Gastrocnemius medialis (tissue), 4 donors: ENCODE measurements at regions of chr11 and their contacts with region 1.

Region 1: GRCh38 chr11:113603277-113604059 is 102.6 kb downstream of the TMPRSS5 start:
- DNase-seq: peak; percentile 41 to 77
- ATAC-seq: peak; percentile 97
- H3K4me3 ChIP-seq: peak overlapping the region in 1 of 4 donors; percentile 12
- H3K27ac ChIP-seq: peak overlapping the region in 3 of 4 donors; percentile 60 to 64 (median 62)
- H3K4me1 ChIP-seq: peaks cover 14 to 20% of the 10 kb centered on the region in 2 donors
- H3K27me3 ChIP-seq: no peaks in the 10 kb centered on the region
- CTCF ChIP-seq: no peak
- POLR2A ChIP-seq: no peak

Region 2: DNA sequence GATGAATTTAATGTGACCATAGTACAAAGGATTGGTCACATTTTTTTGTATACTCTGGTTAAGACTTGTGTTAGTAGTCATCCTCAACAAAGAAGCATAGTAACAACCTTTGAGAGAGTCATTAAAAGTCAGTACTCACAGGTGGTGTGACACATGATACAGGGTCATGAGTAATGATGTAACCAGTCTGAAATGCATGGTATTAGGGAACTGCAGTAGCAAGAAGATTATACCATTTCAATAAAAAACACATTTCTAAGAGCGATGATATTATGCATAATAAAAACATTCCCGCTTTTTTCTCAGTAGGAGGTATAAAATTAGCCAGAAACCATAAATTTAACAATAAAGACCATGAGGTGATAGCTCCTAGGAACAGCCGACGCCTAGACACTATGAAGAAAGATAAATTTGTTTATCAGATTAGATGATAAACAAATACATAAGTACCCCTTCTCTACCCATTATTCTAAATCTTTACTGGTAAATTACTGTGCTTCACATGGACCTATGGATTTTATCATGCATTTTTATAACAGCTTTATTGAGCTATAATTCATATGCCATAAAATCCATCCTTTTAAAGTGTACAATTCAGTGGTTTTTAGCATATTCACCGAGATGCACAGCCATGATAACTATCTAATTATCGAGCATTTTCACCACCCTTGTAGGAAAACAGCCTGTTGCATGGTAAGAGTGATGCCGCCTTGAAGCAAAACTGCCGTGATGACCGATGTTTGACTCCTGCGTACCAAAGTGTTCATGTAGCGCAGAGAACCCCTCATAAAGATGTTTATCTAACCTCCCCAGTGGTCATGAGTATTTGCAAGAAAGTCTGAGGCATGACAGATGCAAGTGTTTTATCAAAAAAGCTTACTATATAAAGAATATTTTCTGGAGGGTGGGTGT is 60.9 kb after region 1 on chr11:
- in situ Hi-C with region 1: no loop called
- intact Hi-C with region 1: no loop called
- DNase-seq: no peak
- ATAC-seq: peak; percentile 75 to 92
- H3K4me3 ChIP-seq: no peak overlapping the region
- H3K27ac ChIP-seq: no peak overlapping the region
- H3K4me1 ChIP-seq: peaks cover 0 to 6% of the 10 kb centered on the region in 2 donors
- H3K27me3 ChIP-seq: no peaks in the 10 kb centered on the region
- CTCF ChIP-seq: no peak
- POLR2A ChIP-seq: no peak

Region 3: DNA sequence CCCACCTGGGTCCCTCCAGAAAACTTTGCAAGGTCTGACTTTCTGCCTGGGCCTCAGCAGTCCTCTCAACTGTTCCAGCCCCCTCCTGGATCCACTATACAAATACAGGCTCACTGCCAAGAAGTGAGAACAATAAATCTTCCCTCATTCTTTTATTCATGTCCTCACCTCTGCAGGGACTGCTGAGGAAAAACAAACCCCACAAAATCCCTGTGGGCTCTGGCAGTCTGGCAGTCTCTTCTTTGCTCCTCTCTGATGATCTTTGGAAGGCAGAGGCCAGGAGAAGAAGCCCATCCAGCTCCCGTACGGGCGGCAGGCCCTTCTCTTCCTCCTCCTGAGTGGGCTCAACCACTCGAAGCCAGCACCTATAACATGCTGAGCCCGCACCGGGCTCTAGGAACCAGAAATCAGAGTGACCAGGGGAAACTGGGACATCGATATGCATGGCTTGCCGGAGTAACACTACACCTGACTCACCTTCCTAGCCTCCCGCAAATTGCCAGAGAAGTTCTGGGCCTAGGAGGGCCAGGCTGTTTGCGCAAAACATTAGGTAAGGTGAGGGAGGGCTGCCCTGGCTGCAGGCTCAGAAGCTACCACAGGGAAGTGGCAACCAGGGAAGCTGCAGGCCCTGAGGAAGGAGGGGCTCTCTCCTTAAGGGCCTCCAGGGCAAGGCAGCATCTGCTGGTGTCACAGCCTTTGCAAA is 78.4 kb after region 1 on chr11:
- in situ Hi-C with region 1: no loop called
- intact Hi-C with region 1: no loop called
- DNase-seq: no peak
- ATAC-seq: peak in 1 of 2 donors; percentile 43
- H3K4me3 ChIP-seq: no peak overlapping the region
- H3K27ac ChIP-seq: no peak overlapping the region
- H3K4me1 ChIP-seq: no peaks in the 10 kb centered on the region
- H3K27me3 ChIP-seq: no peaks in the 10 kb centered on the region
- CTCF ChIP-seq: no peak
- POLR2A ChIP-seq: no peak

Region 4: DNA sequence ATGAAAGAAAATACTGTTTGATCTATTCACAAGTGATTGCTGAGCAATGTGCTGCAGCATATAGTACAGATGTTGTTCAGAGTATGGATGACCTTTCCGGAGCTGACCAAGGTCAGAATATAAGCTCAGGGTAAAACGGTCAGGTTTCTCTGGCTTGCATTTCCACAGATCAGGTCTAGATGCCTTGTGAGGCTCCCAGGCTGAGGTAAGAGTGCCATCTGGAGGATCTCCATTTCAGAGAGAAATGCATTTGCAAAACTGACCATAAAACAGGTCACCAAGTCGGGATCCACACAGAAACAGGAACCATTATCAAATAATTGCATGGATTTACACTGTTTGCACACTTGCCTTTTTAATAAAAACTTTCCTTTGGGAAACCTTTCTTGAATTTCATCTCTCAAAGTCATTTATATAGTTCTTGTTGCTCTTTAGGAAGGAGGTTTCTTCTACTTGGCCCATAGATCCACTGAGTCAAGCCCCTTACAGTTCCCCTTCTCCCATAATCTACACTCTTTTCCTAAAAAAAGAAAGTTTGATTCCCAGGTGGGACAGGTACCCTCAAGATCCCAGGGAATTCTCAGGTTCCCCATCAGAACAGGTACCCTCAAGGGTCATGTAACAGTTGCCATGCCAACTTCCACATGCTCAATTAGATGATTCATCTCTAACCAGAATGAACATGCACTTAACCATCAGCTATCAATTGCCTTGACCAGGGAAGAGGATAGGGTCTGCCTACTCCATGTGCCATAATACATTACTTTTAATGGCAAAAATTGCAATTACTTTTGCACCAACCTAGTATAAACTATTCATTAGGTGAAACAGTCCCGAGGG is 127.6 kb after region 1 on chr11:
- in situ Hi-C with region 1: no loop called
- intact Hi-C with region 1: loop called (anchors 10 kb)
- DNase-seq: peak; percentile 17 to 64
- ATAC-seq: peak; percentile 81 to 97
- H3K4me3 ChIP-seq: no peak overlapping the region
- H3K27ac ChIP-seq: no peak overlapping the region
- H3K4me1 ChIP-seq: peaks cover 5 to 14% of the 10 kb centered on the region in 2 donors
- H3K27me3 ChIP-seq: no peaks in the 10 kb centered on the region
- CTCF ChIP-seq: peak; percentile 41 to 79 (median 71)
- POLR2A ChIP-seq: no peak

Region 5: DNA sequence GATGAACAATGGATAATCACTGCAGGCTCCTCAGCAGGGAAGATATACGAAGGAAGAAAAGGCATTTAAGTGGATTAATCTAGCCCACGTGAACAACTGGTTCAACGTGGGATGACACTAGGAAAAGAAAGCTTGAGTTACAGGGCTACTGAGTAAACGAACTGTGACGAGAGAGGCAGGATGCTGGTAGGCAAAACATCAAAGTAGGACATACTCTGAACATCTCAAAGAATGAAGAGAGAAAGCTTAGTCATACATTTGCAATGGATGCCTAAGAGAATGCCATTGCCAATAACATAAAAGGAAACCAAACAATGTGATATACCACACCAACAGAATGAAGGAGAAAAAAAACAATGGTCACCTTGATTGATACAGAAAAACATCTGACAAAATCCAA is 259.0 kb after region 1 on chr11:
- in situ Hi-C with region 1: no loop called
- intact Hi-C with region 1: no loop called
- DNase-seq: no peak
- ATAC-seq: no peak
- H3K4me3 ChIP-seq: no peak overlapping the region
- H3K27ac ChIP-seq: peak overlapping the region in 2 of 4 donors; percentile 14 to 35
- H3K4me1 ChIP-seq: peaks cover 43 to 47% of the 10 kb centered on the region in 2 donors
- H3K27me3 ChIP-seq: no peaks in the 10 kb centered on the region
- CTCF ChIP-seq: no peak
- POLR2A ChIP-seq: no peak

Region 6: DNA sequence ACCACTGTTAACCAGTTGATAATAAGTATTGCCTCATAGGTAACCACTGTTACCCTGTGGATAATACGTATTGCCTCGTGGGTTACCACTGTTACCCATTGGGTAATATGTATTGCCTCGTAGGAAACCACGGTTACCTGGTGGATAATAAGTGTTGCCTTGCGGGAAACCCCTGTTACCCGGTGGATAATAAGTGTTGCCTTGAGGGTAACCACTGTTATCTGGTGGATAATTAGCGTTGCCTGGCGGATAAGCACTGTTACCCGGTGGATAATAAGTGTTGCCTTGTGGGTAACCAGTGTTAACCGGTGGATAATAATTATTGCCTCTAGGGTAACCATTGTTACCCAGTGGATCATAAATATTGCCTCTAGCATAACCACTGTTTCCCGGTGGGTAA is 1019.4 kb after region 1 on chr11:
- in situ Hi-C with region 1: no loop called
- intact Hi-C with region 1: no loop called
- DNase-seq: no peak
- ATAC-seq: no peak
- H3K4me3 ChIP-seq: no peak overlapping the region
- H3K27ac ChIP-seq: no peak overlapping the region
- H3K4me1 ChIP-seq: no peaks in the 10 kb centered on the region
- H3K27me3 ChIP-seq: no peaks in the 10 kb centered on the region
- CTCF ChIP-seq: no peak
- POLR2A ChIP-seq: no peak